GM10248 (cell line): ENCODE measurements at regions of chr17 and their contacts with region 1.

Region 1: DNA sequence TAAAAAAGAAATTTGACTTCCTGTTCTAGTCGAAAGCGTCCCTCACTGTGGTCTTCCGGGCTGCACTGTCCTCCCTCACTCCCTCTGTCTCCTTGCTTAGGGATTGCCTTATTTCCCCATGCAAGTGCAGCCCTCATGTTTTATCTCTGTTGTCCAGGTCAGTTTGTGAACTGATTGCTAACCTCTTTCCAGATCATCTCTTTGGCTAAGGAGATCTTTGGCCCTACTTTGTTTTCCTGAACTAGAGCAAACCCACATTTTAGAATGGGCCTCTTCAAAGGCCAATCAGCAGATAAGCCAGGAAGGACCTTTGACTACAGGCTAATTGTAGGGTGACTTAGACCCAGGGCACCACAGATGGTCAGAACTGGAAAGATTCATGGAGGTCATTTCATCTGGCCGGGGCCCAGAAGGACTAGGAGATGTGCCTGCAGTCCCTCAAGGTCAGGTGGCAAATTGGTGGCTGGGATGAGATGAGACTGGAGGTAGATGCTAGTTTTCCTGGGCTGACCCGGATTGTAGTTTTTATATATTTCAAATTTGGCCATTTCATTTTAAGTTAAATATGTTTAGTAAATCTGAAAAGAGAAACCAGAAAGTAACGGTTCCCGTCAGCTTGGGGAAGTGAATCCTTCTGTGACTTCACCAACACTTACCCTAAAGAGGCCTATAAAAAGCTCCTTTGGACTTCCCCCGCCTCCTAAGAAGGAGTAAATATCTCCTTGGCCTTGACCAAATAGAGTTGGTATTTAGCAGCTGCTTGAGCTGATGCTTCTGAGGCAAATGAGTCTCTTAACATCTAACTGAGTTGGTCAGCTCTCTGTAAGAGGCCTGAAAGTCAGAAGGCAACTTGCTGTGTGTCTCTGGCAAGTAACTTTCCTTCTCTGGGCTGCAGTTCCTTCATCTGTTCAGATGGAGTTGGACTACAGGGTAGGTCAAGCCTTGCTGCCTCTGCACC is 6.2 kb upstream of the SLC25A19 start:
- DNase-seq: peak; percentile 72
- CTCF ChIP-seq: no peak

Region 2: DNA sequence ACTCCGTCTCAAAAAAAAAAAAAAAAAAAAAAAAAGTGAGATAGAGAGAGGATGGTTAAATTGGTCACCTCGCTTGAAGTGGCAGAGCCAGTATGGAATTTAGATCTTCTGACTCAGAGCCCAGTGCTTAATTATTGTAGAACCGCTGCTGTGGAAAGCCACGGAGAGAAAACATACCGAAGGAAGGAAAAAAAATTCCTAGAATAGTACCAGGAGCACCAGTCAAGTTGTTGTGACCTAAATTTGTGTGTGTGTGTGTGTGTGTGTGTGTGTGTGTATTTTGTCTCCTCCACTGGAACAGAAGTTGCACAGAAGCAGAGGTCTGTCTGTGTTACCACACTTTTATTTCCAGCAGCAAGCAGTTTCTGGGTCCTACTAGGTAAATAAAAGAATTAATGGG is 100.6 kb before region 1 on chr17:
- CTCF ChIA-PET with region 1: no interaction called
- POLR2A ChIA-PET with region 1: no interaction called
- DNase-seq: no peak
- CTCF ChIP-seq: no peak

Region 3: DNA sequence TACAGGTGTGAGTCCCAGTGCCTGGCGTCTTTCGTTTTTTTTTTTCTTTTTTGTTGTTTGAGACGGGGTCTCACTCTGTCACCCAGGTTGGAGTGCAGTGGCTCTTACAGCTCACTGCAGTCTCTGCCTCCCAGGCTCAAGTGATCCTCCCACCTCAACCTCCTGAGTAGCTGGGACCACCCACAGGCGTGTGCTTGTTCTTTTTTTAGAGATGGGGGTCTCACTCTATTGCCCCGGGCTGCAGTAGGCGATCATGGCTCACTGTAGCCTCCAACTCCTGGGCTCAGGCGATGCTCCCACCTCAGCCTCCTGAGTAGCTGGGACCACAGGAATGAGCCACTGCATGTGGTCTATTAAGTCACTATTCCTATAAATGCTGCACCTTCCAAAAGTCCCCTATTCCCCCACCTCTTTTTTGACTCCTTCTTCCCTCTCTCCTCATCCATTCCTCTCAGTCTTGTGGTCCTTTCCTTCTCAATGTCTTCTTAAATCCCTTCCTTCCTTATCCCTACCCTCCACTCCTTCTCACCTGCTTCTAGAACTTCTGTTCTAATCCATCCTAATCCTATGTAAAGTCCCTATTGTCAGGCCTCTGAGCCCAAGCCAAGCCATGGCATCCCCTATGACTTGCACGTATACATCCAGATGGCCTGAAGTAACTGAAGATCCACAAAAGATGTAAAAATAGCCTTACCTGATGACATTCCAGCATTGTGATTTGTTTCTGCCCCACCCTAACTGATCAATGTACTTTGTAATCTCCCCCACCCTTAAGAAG is 43.3 kb before region 1 on chr17:
- CTCF ChIA-PET with region 1: no interaction called
- POLR2A ChIA-PET with region 1: no interaction called
- DNase-seq: no peak
- CTCF ChIP-seq: no peak

Region 4: GRCh38 chr17:75345514-75346167 is 50.2 kb after region 1 on chr17:
- CTCF ChIA-PET with region 1: interaction called, 10 read pairs
- POLR2A ChIA-PET with region 1: interaction called, 8 read pairs
- DNase-seq: peak; percentile 71
- CTCF ChIP-seq: no peak